Activated CD4-positive, alpha-beta T cell treated with anti-CD3 and anti-CD28 coated beads for 36 hours (primary cell): ENCODE measurements at regions of chr10 and their contacts with region 1.

Region 1: GRCh38 chr10:15141136-15142054 is 27.1 kb downstream of the NMT2 start:
- DNase-seq: peak; percentile 67
- ATAC-seq: peak; percentile 86
- H3K4me3 Mint-ChIP-seq: peak overlapping the region; percentile 69
- H3K27ac Mint-ChIP-seq: peak overlapping the region; percentile 83
- H3K4me1 Mint-ChIP-seq: peaks cover 51% of the 10 kb centered on the region
- H3K27me3 Mint-ChIP-seq: no peaks in the 10 kb centered on the region

Region 2: GRCh38 chr10:15035385-15036301 is 105.8 kb before region 1 on chr10:
- CTCF ChIA-PET with region 1: no interaction called
- POLR2A ChIA-PET with region 1: no interaction called
- intact Hi-C with region 1: no loop called
- DNase-seq: no peak
- ATAC-seq: no peak
- H3K4me3 Mint-ChIP-seq: no peak overlapping the region
- H3K27ac Mint-ChIP-seq: no peak overlapping the region
- H3K4me1 Mint-ChIP-seq: no peaks in the 10 kb centered on the region
- H3K27me3 Mint-ChIP-seq: no peaks in the 10 kb centered on the region

Region 3: GRCh38 chr10:15122477-15123030 is 18.8 kb before region 1 on chr10:
- CTCF ChIA-PET with region 1: interaction called, 8 read pairs
- POLR2A ChIA-PET with region 1: interaction called, 8 read pairs
- intact Hi-C with region 1: loop called (anchors 1 kb)
- DNase-seq: peak; percentile 47
- ATAC-seq: peak; percentile 72
- H3K4me3 Mint-ChIP-seq: peak overlapping the region; percentile 40
- H3K27ac Mint-ChIP-seq: peak overlapping the region; percentile 92
- H3K4me1 Mint-ChIP-seq: peaks cover 36% of the 10 kb centered on the region
- H3K27me3 Mint-ChIP-seq: no peaks in the 10 kb centered on the region

Region 4: GRCh38 chr10:15333909-15334649 is 192.7 kb after region 1 on chr10:
- CTCF ChIA-PET with region 1: no interaction called
- POLR2A ChIA-PET with region 1: no interaction called
- intact Hi-C with region 1: no loop called
- DNase-seq: no peak
- ATAC-seq: no peak
- H3K4me3 Mint-ChIP-seq: no peak overlapping the region
- H3K27ac Mint-ChIP-seq: no peak overlapping the region
- H3K4me1 Mint-ChIP-seq: peaks cover 2% of the 10 kb centered on the region
- H3K27me3 Mint-ChIP-seq: no peaks in the 10 kb centered on the region